Dorsolateral prefrontal cortex (tissue), 120 donors: ENCODE measurements at regions of chr9 and their contacts with region 1.

Region 1: DNA sequence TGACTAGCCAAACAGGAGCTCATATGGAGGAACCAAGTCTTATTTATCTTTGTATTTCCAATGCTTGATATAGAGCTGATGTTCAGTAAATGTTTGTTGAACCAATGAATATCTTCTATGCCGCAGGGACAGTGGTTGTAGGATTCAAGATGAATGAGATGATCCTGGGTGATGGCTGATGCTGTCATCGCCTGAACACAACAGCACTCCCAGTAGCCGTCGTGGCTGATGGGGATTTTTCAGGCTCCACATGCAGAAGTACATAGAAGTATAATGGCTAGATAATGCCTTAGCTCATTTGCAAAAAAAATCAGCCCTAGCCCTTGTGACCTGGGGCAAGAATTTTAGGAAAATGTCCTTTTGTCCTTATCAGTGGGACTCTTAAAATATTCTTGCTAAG is 69.0 kb upstream of the OR13F1 start:
- DNase-seq: no peak
- H3K4me3 ChIP-seq: no peak overlapping the region
- H3K27ac ChIP-seq: no peak overlapping the region
- H3K27me3 ChIP-seq: no peaks in the 10 kb centered on the region
- CTCF ChIP-seq: no peak

Region 2: DNA sequence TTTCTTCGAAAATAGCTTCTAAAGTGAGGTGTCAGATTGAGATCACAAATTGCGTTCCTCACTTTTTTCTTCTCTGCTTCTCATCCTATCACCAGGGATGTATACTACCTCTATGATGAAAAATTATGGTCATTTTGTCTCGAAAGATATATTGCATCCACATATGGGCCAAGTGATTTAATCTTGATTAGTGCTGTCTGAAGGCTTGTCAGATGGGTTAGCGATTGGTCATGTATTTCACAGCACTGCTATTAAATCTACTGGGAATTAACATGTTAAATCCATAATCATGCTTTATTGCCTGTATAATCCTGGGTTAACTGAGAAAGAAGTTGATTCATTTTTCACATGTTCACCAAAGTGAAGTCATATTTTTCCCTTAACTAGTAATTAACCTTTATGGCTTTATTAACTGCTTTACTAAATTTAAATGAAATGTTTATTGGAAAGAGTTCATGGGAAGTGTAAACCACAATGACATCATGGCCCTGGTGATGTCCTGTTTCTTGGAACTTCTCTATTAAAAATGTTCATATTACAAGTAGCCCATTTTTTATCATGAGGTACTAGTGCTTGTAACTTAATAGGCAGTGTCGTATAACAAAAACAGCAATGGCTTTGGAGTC is 147.7 kb before region 1 on chr9:
- intact Hi-C with region 1: no loop called
- DNase-seq: no peak
- H3K4me3 ChIP-seq: no peak overlapping the region
- H3K27ac ChIP-seq: no peak overlapping the region
- H3K27me3 ChIP-seq: peaks cover 0 to 7% (median 0%) of the 10 kb centered on the region in 45 donors
- CTCF ChIP-seq: no peak

Region 3: GRCh38 chr9:104494808-104495207 is 59.7 kb after region 1 on chr9:
- intact Hi-C with region 1: loop called in 1 of 2 experiments (anchors 10 kb)
- DNase-seq: no peak
- H3K4me3 ChIP-seq: no peak overlapping the region
- H3K27ac ChIP-seq: no peak overlapping the region
- H3K27me3 ChIP-seq: no peaks in the 10 kb centered on the region
- CTCF ChIP-seq: peak in 33 of 56 donors; percentile 7 to 50 (median 29)

Region 4: GRCh38 chr9:104738452-104738851 is 303.4 kb after region 1 on chr9:
- intact Hi-C with region 1: no loop called
- DNase-seq: no peak
- H3K4me3 ChIP-seq: no peak overlapping the region
- H3K27ac ChIP-seq: no peak overlapping the region
- H3K27me3 ChIP-seq: no peaks in the 10 kb centered on the region
- CTCF ChIP-seq: no peak